Activated naive CD4-positive, alpha-beta T cell treated with anti-CD3 and anti-CD28 coated beads for 36 hours (primary cell): ENCODE measurements at regions of chr1 and their contacts with region 1.

Region 1: DNA sequence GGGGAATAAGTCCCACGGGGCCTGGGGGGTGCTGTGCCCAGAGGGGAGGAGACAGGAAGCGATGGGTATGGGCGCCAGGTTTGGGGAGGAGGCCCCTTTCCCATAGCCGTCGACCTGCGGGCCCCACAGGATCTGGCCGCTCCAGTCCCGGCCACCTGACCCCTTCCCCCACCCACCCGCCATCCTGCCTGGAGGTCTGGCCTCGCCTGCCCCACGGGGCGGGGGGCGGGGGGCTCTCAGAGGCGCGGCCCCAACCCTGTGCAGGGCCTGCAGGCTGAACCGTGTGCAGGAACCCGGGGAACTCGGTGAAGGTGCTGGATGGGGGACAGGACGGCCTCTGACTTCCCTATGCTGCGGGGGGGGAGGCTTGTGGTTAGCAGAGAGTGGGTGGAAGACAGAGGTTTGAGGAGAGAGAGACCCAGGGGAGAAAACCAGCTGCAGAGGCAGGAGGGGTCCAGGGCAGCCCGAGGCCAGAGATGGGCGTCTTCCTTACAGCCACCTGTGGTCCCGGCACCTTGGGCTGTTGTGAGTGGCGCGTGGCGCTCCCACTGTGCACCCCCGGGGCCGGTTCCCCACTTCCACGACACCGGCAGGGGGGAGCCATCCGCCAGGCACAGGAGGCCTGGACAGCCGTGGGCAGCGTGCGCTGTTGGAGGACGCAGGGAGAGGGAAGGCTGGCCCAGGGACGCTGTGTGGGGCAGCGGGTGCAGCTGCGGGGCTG is 2.5 kb upstream of the TNFRSF18 start:
- DNase-seq: peak; percentile 66
- H3K4me3 Mint-ChIP-seq: peak overlapping the region; percentile 80
- H3K27ac Mint-ChIP-seq: peak overlapping the region; percentile 89
- H3K4me1 Mint-ChIP-seq: peaks cover 34% of the 10 kb centered on the region
- H3K27me3 Mint-ChIP-seq: no peaks in the 10 kb centered on the region

Region 2: GRCh38 chr1:1079408-1080121 is 129.3 kb before region 1 on chr1:
- CTCF ChIA-PET with region 1: no interaction called
- intact Hi-C with region 1: no loop called
- DNase-seq: peak; percentile 46
- H3K4me3 Mint-ChIP-seq: peak overlapping the region; percentile 47
- H3K27ac Mint-ChIP-seq: no peak overlapping the region
- H3K4me1 Mint-ChIP-seq: peaks cover 8% of the 10 kb centered on the region
- H3K27me3 Mint-ChIP-seq: peaks cover 3% of the 10 kb centered on the region

Region 3: DNA sequence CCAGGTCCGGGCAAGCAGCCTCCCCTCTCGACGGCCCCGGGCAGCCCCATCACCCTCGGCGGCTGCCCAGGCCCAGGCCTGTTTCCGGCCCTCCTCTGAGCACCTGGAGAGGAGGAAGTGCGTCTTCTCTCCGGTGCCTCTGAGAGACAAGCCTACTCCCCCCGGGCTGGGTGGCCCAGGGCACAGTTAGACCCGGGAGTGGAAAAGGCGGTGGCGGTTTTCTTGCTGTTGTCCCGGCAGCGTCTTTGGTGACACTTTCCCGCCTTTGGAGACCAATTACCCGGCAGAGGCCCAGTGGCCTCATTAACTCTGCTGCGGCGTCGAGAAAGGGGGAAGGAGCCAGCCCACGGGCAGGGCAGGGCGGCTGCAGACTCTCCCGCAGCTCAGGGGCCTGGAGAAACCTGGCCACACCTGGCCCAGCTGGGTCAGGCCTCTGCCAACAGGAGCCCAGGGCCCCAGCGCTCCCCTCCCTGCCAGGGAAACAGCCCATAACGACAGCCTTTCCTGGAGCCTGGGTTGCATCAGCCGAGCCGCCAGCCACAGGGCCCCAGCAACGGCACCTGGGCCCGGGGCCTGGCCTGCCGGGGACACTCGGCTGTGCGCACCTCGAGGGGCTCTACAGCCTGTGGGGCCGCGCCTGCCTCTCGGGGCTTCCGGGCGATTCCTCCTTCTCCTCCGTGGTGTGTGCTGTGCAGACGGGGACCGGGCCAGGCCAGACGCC is 64.6 kb before region 1 on chr1:
- CTCF ChIA-PET with region 1: no interaction called
- intact Hi-C with region 1: loop called (anchors 2 kb)
- DNase-seq: peak; percentile 88
- H3K4me3 Mint-ChIP-seq: peak overlapping the region; percentile 62
- H3K27ac Mint-ChIP-seq: peak overlapping the region; percentile 93
- H3K4me1 Mint-ChIP-seq: peaks cover 20% of the 10 kb centered on the region
- H3K27me3 Mint-ChIP-seq: no peaks in the 10 kb centered on the region